ENCODE measurements at regions of chr11 and their contacts with region 1.

Region 1: DNA sequence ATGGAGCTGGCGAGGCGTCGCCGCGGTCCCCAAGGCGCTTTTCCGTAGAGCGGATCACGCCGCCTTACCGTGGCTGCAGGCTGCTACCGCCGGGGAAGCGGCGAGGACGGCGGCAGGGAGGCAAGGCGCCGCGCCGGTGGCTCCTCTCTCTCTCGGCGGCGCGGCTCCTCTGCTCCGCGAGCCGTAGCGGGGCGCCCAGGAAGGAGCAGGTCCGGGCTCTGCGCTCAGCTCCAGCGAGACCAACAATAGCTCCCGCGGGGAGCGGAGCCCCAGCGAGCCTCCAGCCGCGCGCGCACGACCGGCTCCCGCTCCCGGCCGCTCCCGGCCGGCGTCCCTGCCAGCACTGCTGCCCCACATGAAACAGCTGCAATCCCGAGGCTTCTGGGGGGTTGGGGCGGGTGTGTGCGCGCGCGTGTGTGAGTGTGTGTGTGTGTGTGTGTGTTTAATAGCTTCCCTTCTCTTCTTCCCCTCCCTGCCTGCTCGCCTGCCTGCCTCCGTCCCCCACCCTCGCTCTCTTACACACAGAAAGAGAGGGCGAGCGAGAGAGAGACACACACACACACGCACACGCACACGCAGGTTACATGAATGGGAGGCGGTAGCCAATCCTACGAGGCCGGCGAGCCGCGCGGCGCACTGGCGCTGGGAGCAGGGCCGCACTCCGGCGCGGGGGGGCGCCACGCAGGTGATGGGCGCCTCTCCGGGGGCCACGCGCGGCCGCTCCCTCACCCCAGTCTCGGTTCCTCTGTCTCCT is at the start of gene TENM4:
- DNase-seq: peak; percentile 78 to 90
- ATAC-seq: peak; percentile 66
- H3K4me3 ChIP-seq: peak within 1 kb of the TSS; percentile 34 to 42
- H3K27ac ChIP-seq: peak within 1 kb of the TSS in 1 of 2 donors; percentile 70
- H3K4me1 ChIP-seq: no peaks in the 10 kb centered on the region
- H3K27me3 ChIP-seq: peaks cover 0 to 2% of the 10 kb centered on the region in 2 donors
- total RNA-seq, gene TENM4: 4.7 to 9.1 TPM

Region 2: DNA sequence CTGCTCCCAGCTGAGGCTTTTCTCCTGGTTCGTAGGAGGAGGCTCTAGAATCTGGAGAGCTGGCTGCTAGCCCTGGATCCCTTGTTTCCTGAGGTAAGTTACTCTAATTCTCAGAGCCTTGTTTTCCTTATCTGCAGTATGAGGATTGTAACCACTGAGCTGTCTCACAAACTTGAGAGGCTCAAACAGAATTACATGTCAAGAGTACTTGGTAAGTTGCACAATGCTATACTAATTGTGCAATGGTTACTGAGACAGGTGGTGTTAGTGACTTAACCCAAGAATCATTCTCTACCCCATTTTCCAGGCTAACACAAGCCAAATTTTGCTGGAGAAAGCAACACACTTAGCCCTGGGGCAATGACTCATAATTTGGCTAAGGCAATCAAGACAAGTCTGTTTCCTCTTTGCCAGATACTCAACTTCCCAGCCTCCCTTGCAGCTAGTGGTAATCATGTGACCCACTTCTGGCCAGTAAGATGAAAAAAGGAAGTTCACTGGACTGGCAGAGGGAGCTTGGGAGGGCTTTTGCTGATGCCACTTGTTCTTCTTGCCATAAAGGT is 347.7 kb before region 1 on chr11:
- intact Hi-C with region 1: loop called in 1 of 2 experiments (anchors 10 kb)
- DNase-seq: peak in 1 of 2 donors; percentile 61
- ATAC-seq: peak; percentile 58
- H3K4me3 ChIP-seq: no peak overlapping the region
- H3K27ac ChIP-seq: no peak overlapping the region
- H3K4me1 ChIP-seq: peaks cover 0 to 4% of the 10 kb centered on the region in 2 donors
- H3K27me3 ChIP-seq: no peaks in the 10 kb centered on the region

Region 3: DNA sequence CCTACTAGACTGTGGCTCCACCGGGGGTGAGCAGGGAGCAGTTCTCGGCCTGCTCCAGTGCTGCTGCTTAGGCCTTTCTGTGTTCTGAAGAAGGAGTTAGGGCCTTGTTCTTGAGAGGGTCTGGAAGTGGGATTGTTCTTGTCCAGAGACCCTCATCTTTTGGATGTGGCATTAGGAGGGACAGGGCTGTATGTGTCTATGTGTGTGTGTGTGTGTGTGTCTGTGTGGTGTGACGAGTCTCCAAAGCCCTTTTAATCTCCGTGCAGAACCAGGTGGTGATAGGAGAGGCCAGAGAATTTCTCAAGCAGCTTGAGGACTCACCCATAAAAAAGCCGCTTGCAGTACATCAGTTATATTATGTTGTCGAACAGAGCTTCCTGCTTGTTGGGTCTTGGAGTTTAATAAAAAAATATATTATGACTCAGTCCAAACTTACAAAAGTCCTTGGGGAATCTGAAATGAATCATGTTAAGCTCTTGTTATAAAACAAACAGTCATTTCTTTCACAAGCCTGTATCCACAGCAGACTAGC is 196.3 kb before region 1 on chr11:
- intact Hi-C with region 1: loop called (anchors 5 to 10 kb)
- DNase-seq: no peak
- ATAC-seq: peak; percentile 78
- H3K4me3 ChIP-seq: no peak overlapping the region
- H3K27ac ChIP-seq: peak overlapping the region; percentile 2 to 82
- H3K4me1 ChIP-seq: peaks cover 2 to 8% of the 10 kb centered on the region in 2 donors
- H3K27me3 ChIP-seq: no peaks in the 10 kb centered on the region

Region 4: DNA sequence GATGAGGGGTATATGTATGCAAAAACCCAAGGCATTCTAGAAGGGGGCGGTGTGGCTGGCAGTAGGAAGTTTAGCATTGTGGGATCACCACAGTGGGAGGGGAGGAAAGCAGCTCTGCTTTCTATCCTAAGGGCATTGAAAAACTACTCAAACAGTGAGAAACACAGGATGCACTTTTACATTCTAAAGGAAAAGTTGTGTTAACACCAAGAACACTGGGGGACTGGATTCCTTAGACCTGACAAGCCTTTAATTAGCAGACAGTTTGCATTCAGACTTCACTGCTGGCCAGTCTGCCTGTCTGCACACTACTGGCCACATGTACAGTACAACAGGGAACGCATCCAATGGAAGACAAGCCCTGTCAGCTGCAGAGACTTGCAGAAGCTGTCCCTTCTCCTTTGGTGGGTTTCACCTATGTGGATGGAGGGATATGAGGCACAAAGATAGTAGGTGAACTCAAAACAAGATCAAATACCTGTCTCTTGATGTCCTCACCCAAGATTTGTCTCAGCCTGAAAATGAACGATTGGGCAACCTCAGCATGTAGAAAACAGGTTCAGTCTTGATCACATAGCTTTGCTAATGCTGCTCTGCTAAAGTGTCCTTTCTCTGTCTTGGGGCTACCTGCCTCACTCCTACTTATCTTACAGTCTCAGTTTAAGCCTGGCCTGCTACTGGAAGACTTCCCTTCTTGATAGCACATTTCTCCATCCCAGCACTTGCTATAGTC is 64.6 kb before region 1 on chr11:
- intact Hi-C with region 1: no loop called
- DNase-seq: no peak
- ATAC-seq: no peak
- H3K4me3 ChIP-seq: no peak overlapping the region
- H3K27ac ChIP-seq: no peak overlapping the region
- H3K4me1 ChIP-seq: no peaks in the 10 kb centered on the region
- H3K27me3 ChIP-seq: no peaks in the 10 kb centered on the region

Region 5: GRCh38 chr11:79400717-79401686 is 39.6 kb before region 1 on chr11:
- intact Hi-C with region 1: loop called (anchors 5 kb)
- DNase-seq: peak; percentile 51 to 79
- ATAC-seq: no peak
- H3K4me3 ChIP-seq: no peak overlapping the region
- H3K27ac ChIP-seq: no peak overlapping the region
- H3K4me1 ChIP-seq: no peaks in the 10 kb centered on the region
- H3K27me3 ChIP-seq: no peaks in the 10 kb centered on the region

Region 6: GRCh38 chr11:79493555-79494171 is 53.0 kb after region 1 on chr11:
- intact Hi-C with region 1: loop called in 1 of 2 experiments (anchors 5 kb)
- DNase-seq: peak; percentile 70 to 86
- ATAC-seq: peak; percentile 79
- H3K4me3 ChIP-seq: no peak overlapping the region
- H3K27ac ChIP-seq: no peak overlapping the region
- H3K4me1 ChIP-seq: no peaks in the 10 kb centered on the region
- H3K27me3 ChIP-seq: no peaks in the 10 kb centered on the region

Measured in aorta (tissue), 5 donors.